PC-3 (cell line): ENCODE measurements at regions of chr6 and their contacts with region 1.

Region 1: GRCh38 chr6:107033126-107033525 is 5.1 kb downstream of the MTRES1 start:
- DNase-seq: peak; percentile 32
- ATAC-seq: peak; percentile 40
- H3K4me3 ChIP-seq: no peak overlapping the region
- H3K27ac ChIP-seq: 0 out of 2 replicates have a peak overlapping the region, but pooled peaks have one; percentile 3
- H3K4me1 ChIP-seq: peaks cover 18% of the 10 kb centered on the region
- H3K27me3 ChIP-seq: no peaks in the 10 kb centered on the region
- CTCF ChIP-seq: no peak

Region 2: GRCh38 chr6:106883808-106884262 is 149.3 kb before region 1 on chr6:
- CTCF ChIA-PET with region 1: no interaction called
- POLR2A ChIA-PET with region 1: no interaction called
- intact Hi-C with region 1: no loop called
- DNase-seq: peak; percentile 36
- ATAC-seq: no peak
- H3K4me3 ChIP-seq: no peak overlapping the region
- H3K27ac ChIP-seq: no peak overlapping the region
- H3K4me1 ChIP-seq: peaks cover 37% of the 10 kb centered on the region
- H3K27me3 ChIP-seq: no peaks in the 10 kb centered on the region
- CTCF ChIP-seq: peak; percentile 52

Region 3: DNA sequence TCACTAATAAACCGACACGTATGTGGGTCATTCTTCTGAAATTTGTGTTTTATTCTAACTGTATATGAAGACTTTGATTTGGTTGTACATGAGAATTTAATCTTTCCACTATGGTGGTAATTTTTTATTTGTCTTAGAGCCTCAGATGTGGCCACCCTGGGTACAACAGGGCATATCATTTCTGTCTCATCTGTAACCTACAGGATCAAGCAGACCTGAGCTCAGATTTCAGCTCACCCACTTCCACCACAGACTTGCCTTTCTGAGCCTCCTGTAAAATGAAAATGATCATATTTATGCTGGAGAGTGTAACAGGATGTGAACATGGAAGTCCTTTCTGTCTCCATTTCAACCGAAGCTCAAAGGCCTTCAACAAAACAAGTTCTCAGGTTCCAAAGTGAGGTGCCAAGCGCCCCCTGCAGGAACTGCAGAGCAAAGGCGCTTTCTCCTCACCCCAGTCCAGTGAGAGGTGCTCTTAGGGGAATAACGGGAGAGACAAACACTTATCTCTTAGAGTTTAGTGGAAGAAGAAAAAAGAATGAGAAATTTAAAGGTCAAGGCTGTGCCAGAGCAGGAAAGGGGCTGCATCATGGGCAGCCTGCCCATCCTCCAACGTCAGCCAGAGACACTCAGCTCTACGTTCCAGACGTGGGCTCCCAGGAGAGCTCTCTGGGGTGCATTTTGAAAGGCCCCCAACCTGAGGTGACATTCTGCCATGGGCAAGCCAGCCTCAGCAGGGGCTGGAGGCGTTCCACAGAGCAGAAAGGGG is 35.6 kb before region 1 on chr6:
- CTCF ChIA-PET with region 1: interaction called, 11 read pairs
- POLR2A ChIA-PET with region 1: no interaction called
- intact Hi-C with region 1: no loop called
- DNase-seq: peak; percentile 61
- ATAC-seq: peak; percentile 73
- H3K4me3 ChIP-seq: no peak overlapping the region
- H3K27ac ChIP-seq: no peak overlapping the region
- H3K4me1 ChIP-seq: no peaks in the 10 kb centered on the region
- H3K27me3 ChIP-seq: no peaks in the 10 kb centered on the region
- CTCF ChIP-seq: peak; percentile 90

Region 4: DNA sequence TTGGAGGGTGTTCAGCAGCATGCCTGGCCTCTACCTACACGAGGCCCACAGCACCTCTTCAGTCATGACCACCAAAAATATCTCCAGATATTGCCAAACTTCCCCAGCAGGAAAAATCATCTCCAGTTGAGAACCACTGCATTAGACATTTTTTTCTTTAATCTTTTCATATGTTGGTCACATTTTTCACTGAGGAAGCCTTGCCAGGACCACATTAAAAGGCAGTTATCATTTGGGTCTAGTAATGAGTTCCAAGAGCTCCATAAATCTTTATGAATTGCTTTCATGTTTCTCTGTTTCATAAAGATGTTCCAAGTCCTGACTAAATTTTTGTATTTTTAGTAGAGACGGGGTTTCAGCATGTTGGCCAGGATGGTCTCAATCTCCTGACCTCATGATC is 23.7 kb after region 1 on chr6:
- CTCF ChIA-PET with region 1: no interaction called
- POLR2A ChIA-PET with region 1: interaction called, 11 read pairs
- intact Hi-C with region 1: no loop called
- DNase-seq: no peak
- ATAC-seq: no peak
- H3K4me3 ChIP-seq: no peak overlapping the region
- H3K27ac ChIP-seq: no peak overlapping the region
- H3K4me1 ChIP-seq: no peaks in the 10 kb centered on the region
- H3K27me3 ChIP-seq: no peaks in the 10 kb centered on the region
- CTCF ChIP-seq: no peak

Region 5: DNA sequence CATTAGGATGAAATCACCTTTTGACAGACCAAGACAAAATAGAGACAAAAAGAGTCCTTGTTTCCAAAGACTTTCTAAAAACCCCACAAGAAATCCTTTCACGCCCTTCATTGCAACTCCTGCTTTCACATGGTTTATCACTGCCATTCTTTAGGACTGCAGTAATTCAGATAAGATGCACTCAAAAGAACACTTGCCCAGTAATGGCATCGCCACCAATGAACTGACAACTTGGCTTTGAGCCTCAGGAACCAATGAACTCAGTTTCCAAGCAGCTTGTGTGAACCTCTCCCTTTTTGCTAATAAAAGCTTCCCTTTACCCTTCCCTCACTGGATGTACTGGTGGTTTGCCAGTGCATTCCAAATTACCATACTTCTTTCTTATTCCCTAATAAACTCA is 1019.6 kb after region 1 on chr6:
- CTCF ChIA-PET with region 1: interaction called, 13 read pairs
- POLR2A ChIA-PET with region 1: no interaction called
- intact Hi-C with region 1: no loop called
- DNase-seq: no peak
- ATAC-seq: no peak
- H3K4me3 ChIP-seq: no peak overlapping the region
- H3K27ac ChIP-seq: no peak overlapping the region
- H3K4me1 ChIP-seq: no peaks in the 10 kb centered on the region
- H3K27me3 ChIP-seq: no peaks in the 10 kb centered on the region
- CTCF ChIP-seq: no peak